ENCODE measurements at regions of chr1 and their contacts with region 1.

Region 1: GRCh38 chr1:204506961-204507387 is 9.2 kb upstream of the MDM4 start:
- DNase-seq: peak; percentile 98
- H3K4me3 Mint-ChIP-seq: peak overlapping the region; percentile 77
- H3K27ac Mint-ChIP-seq: peak overlapping the region; percentile 90
- H3K4me1 Mint-ChIP-seq: peaks cover 29% of the 10 kb centered on the region
- H3K27me3 Mint-ChIP-seq: no peaks in the 10 kb centered on the region
- CTCF ChIP-seq: no peak

Region 2: GRCh38 chr1:203861379-203862184 is 645.4 kb before region 1 on chr1 and contains the start of gene SNRPE:
- CTCF ChIA-PET with region 1: interaction called, 3 read pairs
- POLR2A ChIA-PET with region 1: interaction called, 11 read pairs
- intact Hi-C with region 1: loop called (anchors 1 kb)
- DNase-seq: peak; percentile 100
- H3K4me3 Mint-ChIP-seq: peak within 1 kb of the TSS; percentile 100
- H3K27ac Mint-ChIP-seq: peak within 1 kb of the TSS; percentile 100
- H3K4me1 Mint-ChIP-seq: peaks cover 43% of the 10 kb centered on the region
- H3K27me3 Mint-ChIP-seq: no peaks in the 10 kb centered on the region
- CTCF ChIP-seq: peak; percentile 100
- total RNA-seq, gene SNRPE: 358 and 423 TPM in 2 replicates

Region 3: GRCh38 chr1:204368996-204369726 is 137.8 kb before region 1 on chr1:
- CTCF ChIA-PET with region 1: interaction called, 42 read pairs
- POLR2A ChIA-PET with region 1: interaction called, 5 read pairs
- intact Hi-C with region 1: no loop called
- DNase-seq: no peak
- H3K4me3 Mint-ChIP-seq: no peak overlapping the region
- H3K27ac Mint-ChIP-seq: no peak overlapping the region
- H3K4me1 Mint-ChIP-seq: no peaks in the 10 kb centered on the region
- H3K27me3 Mint-ChIP-seq: no peaks in the 10 kb centered on the region
- CTCF ChIP-seq: no peak

Region 4: DNA sequence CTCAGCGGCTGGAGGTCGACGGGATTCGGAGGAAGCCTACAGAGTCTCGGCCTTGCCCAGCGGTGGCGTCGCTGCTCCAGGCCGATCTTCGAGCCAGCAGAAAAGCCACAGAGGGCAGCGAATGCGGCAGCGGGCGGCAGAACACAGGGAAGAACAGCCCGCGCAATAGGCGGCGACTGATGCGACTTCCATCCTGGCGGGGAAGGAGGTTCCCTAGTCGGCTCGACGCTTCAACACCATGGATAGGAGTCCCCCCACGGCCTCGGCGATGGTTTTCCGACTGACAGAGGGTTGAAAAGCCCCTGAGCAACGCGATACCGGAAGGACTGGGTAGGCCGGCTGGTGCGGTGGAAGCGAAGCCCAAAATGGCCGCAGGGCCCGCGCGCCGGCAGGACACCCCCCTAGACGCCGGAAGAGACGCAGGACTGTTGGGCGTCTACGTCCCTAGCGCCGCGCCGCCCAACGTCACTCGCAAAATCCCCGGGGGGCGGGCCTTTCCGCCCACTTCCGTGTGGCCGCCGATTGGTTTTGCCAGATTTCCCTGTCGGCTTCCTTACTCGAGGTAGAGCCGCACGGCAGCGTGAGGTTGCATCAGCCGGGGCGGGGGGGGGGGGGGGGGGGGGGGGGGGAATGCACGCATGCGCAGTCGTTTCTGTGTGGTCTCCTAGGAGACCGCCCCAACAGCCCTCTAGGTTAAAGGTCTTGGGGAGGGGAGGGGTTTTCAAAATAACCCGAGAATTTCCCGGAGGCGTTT is 95.3 kb before region 1 on chr1 and contains the start of gene PPP1R15B:
- CTCF ChIA-PET with region 1: interaction called, 1,125 read pairs
- POLR2A ChIA-PET with region 1: interaction called, 142 read pairs
- intact Hi-C with region 1: loop called (anchors 1 kb)
- DNase-seq: peak; percentile 100
- H3K4me3 Mint-ChIP-seq: peak within 1 kb of the TSS; percentile 100
- H3K27ac Mint-ChIP-seq: peak within 1 kb of the TSS; percentile 100
- H3K4me1 Mint-ChIP-seq: peaks cover 18% of the 10 kb centered on the region
- H3K27me3 Mint-ChIP-seq: no peaks in the 10 kb centered on the region
- CTCF ChIP-seq: no peak
- total RNA-seq, gene PPP1R15B: 86.0 and 94.8 TPM in 2 replicates

Region 5: GRCh38 chr1:204431310-204432165 is 75.4 kb before region 1 on chr1:
- CTCF ChIA-PET with region 1: interaction called, 1,125 read pairs
- POLR2A ChIA-PET with region 1: interaction called, 253 read pairs
- intact Hi-C with region 1: loop called (anchors 1 kb)
- DNase-seq: peak; percentile 88
- H3K4me3 Mint-ChIP-seq: no peak overlapping the region
- H3K27ac Mint-ChIP-seq: no peak overlapping the region
- H3K4me1 Mint-ChIP-seq: peaks cover 39% of the 10 kb centered on the region
- H3K27me3 Mint-ChIP-seq: no peaks in the 10 kb centered on the region
- CTCF ChIP-seq: peak; percentile 99

Region 6: GRCh38 chr1:204494281-204495077 is 12.5 kb before region 1 on chr1 and contains the start of gene PIK3C2B:
- CTCF ChIA-PET with region 1: interaction called, 79 read pairs
- POLR2A ChIA-PET with region 1: interaction called, 104 read pairs
- intact Hi-C with region 1: no loop called
- DNase-seq: peak; percentile 92
- H3K4me3 Mint-ChIP-seq: peak within 1 kb of the TSS; percentile 86
- H3K27ac Mint-ChIP-seq: peak within 1 kb of the TSS; percentile 24
- H3K4me1 Mint-ChIP-seq: peaks cover 26% of the 10 kb centered on the region
- H3K27me3 Mint-ChIP-seq: peaks cover 41% of the 10 kb centered on the region
- CTCF ChIP-seq: peak; percentile 93
- total RNA-seq, gene PIK3C2B: 3.4 and 4.4 TPM in 2 replicates

Region 7: GRCh38 chr1:204583906-204584632 is 77.1 kb after region 1 on chr1:
- CTCF ChIA-PET with region 1: no interaction called
- POLR2A ChIA-PET with region 1: no interaction called
- intact Hi-C with region 1: no loop called
- DNase-seq: peak; percentile 49
- H3K4me3 Mint-ChIP-seq: no peak overlapping the region
- H3K27ac Mint-ChIP-seq: no peak overlapping the region
- H3K4me1 Mint-ChIP-seq: no peaks in the 10 kb centered on the region
- H3K27me3 Mint-ChIP-seq: no peaks in the 10 kb centered on the region
- CTCF ChIP-seq: no peak

Measured in MCF 10A (cell line).